Activated CD4-positive, alpha-beta T cell treated with anti-CD3 and anti-CD28 coated beads, Interleukin-2, amount 10 ng/mL, durations not matched to agents 24 days and 14 days (primary cell): ENCODE measurements at regions of chr22 and their contacts with region 1.

Region 1: DNA sequence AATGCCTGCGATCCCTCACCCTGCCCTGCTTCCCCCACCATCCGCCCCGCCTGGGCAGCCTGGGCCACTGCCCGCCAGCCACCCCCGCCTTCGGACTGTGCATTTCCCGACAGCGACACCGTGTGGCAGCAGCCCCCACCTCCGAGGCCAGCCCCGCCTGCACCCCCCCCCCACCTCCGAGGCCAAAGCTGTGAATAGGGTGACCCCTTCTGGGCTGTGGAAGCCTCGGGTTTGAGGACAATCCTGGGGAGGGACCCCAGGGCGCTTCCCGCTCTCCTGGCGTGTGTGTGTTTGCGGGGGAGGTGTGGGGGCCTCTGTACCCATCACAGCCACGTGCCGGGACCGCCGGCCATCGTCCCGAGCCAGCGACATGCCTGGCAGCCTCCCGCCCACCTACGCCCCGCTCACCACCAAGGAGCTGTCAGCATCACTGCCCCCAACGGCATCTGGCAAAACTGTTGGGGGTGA is 33.8 kb upstream of the PPARA start:
- DNase-seq: peak; percentile 95
- H3K4me3 Mint-ChIP-seq: no peak overlapping the region
- H3K27ac Mint-ChIP-seq: no peak overlapping the region
- H3K4me1 Mint-ChIP-seq: peaks cover 5% of the 10 kb centered on the region
- H3K27me3 Mint-ChIP-seq: no peaks in the 10 kb centered on the region

Region 2: DNA sequence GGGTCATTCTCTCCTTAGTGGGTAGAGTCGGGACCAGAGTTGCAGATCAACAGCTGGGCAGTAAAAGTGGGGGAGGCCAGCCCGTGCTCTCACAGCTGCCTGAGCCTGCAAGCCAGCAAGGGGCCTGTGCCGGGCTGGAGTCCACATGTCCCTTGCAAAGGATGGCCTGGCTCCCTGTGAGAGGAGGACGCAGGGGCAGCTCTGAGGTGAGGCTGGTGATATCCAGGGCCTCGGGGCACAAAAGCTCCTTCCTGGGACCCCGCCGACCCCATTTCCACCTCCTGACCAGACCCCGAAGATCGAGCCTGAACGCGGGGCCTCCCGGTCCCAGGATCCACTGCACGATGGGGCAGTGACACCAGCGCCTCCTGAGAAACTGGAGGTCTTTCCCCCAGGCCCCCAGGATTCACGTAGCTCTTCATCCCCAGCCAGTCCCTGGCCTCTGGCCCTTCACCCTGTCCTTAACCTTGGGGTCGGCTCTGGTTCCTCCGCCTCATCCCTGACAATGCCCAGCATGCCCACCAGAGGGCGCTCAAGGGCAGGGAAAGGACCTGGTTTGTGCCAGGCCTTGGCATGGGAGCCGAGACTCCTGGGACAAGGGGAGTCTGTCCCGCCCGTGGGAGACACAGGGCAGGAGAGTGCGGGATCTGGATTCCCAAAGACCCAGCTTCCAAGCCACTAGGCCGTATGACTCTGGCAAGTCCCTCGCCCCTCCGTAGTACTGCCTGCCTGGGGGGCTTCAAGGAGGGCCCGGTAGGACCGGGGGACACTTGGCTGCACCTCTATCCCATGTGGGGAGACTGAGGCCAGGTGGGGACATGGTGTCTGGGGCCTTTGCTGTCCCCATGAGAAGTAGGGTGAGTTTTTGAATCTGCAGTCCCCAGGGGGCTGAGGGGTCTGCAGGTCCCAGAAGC is 121.8 kb before region 1 on chr22:
- intact Hi-C with region 1: loop called (anchors 1 kb)
- DNase-seq: peak; percentile 94
- H3K4me3 Mint-ChIP-seq: no peak overlapping the region
- H3K27ac Mint-ChIP-seq: peak overlapping the region; percentile 36
- H3K4me1 Mint-ChIP-seq: no peaks in the 10 kb centered on the region
- H3K27me3 Mint-ChIP-seq: peaks cover 5% of the 10 kb centered on the region

Region 3: DNA sequence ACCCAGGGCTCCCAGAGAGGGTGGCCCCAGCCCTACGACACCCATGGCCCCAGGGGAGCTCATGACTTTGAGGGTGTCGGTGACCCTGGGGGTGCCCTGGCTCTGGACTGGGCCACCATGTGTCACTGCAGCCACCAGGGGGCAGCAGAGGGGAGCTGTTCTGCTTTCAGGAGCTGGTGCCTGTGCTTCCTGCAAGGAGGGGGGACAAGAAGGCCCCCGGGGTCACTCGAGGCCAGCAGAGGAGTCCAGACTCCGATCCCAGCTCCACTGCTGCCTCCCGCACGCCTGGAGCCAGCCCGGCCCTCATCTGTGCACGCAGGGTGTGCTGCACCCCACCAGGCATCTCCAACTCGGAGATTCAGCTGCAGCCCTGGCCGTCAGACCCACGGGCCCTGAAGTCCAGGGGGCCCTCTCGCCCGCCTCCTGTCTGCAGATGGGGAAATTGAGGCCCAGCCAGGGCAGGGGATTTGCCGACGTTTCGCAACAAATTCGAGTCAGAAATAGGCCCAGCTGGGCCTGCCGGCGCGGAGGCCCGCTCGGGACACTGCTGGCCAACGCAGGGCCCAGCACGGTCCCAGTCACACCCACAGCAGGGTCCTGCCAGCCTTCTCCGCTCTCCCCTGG is 110.0 kb before region 1 on chr22:
- intact Hi-C with region 1: loop called (anchors 1 kb)
- DNase-seq: peak; percentile 96
- H3K4me3 Mint-ChIP-seq: no peak overlapping the region
- H3K27ac Mint-ChIP-seq: no peak overlapping the region
- H3K4me1 Mint-ChIP-seq: peaks cover 7% of the 10 kb centered on the region
- H3K27me3 Mint-ChIP-seq: no peaks in the 10 kb centered on the region